ENCODE measurements at regions of chr18 and their contacts with region 1.

Region 1: DNA sequence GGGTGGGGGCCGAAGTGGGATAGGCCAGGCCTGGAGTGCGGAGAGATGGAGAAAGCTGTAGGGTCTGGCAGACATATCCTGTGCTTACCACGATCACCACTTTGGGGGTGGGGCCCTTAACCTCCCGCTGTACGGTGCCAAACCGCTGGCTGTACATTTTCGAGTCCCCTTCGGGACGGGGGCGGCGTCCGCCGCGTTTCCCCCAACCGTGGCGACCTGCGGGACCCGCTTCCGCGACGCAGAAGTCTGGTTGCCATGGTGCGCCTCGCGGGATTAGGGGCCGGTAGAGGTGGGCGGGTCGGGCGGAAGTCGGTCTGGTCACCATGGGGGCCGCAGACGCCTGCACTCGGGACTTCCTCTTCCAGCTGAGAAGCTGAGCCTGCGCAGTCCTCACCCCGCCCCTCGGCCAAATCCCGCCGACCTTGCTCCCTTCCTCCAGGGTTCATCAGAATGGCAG is at the start of gene CFAP53:
- DNase-seq: peak; percentile 82 to 90 (median 87)
- H3K4me3 ChIP-seq: peak within 1 kb of the TSS; percentile 65 to 92 (median 73)
- H3K4me3 Mint-ChIP-seq: peak within 1 kb of the TSS; percentile 85 to 94
- H3K27ac ChIP-seq: peak within 1 kb of the TSS in 1 of 2 donors; percentile 59
- H3K27ac Mint-ChIP-seq: peak within 1 kb of the TSS in 6 of 7 donors; percentile 50 to 84 (median 80)
- H3K4me1 ChIP-seq: peaks cover 18 to 29% of the 10 kb centered on the region in 2 donors
- H3K4me1 Mint-ChIP-seq: peaks cover 23% of the 10 kb centered on the region
- H3K27me3 ChIP-seq: peaks cover 0 to 2% of the 10 kb centered on the region in 2 donors
- H3K27me3 Mint-ChIP-seq: peaks cover 1 to 10% (median 7%) of the 10 kb centered on the region in 3 donors
- CTCF ChIP-seq: no peak
- polyA plus RNA-seq, gene CFAP53: 0.08 to 0.14 TPM in 2 of 3 donors, not detected in the other

Region 2: DNA sequence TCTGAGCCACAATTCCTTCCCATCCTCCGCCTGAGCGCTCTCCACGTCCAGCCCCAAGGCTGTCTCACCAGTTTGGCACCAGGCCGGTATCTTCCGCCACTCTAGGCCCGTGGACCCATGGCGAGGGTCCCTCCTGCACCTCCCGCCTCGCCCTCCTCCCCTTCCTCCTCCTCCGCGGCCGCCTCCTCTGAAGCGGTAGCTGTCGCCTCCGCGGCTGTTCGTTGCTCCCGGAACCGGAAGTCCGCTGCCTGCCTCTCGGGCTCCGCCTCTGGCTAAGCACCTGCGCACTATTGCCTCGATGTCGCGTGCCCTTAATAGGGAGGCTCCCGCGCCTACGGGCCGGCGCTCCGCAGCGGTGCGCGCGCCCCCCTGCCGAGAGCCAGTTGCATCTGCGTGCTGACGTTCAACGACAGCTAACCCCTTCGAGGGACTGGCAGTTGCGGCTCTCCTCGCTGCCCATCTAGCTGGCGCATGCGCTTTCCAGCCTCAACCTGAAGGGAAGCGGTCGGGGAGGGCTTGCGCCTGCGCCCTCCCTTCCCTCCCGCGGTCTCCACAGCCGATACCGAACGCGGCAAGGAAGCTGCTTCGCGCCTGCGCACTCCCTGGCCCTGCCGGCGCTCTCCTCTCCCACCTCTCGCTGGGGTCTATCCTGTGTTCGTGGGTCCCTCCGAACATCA is 15.2 kb after region 1 on chr18 and contains the start of gene MBD1:
- intact Hi-C with region 1: no loop called
- DNase-seq: peak; percentile 97 to 98 (median 98)
- H3K4me3 ChIP-seq: peak within 1 kb of the TSS; percentile 78 to 92 (median 86)
- H3K4me3 Mint-ChIP-seq: peak within 1 kb of the TSS; percentile 93 to 98
- H3K27ac ChIP-seq: peak within 1 kb of the TSS; percentile 86 to 87
- H3K27ac Mint-ChIP-seq: peak within 1 kb of the TSS; percentile 93 to 98 (median 96)
- H3K4me1 ChIP-seq: peaks cover 26 to 55% of the 10 kb centered on the region in 2 donors
- H3K4me1 Mint-ChIP-seq: peaks cover 49% of the 10 kb centered on the region
- H3K27me3 ChIP-seq: no peaks in the 10 kb centered on the region
- H3K27me3 Mint-ChIP-seq: peaks cover 0 to 2% (median 0%) of the 10 kb centered on the region in 3 donors
- CTCF ChIP-seq: peak; percentile 21
- polyA plus RNA-seq, gene MBD1: 13.2 to 88.6 (median 17.4) TPM

Region 3: DNA sequence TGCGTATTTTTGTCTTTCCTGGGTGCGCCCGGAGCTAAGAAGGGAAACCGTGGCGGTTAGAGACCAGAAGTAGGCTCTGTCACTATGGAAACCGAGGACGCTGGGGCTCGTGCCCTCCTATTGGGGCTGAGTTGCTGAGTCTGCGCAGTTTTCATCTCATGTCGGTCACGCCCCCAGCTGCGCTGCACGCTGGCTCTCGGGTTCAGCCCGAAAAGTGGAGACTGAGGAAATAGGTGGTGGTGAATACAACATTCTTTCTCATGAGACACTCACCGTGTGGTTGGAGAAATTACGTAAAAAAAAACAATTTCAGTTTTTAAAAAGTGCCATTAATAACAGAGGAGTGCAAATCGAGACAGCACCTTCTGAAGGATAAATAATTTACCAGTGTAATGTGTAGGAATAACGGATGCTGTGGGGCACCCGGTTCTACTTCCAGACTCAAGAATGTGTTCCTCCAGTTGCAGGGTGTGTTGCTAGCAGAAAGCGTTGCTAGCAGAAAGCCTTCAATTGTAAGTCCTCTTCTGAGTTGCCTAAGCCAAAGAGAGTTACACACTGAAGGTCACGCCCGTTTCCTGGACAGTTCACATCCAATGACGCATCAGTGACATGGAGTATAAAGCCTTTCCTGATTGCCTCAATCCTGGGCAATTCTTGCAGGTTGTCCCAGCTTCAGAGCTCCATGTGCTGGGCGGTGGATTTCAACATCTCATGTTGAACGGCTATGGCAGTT is 41.6 kb after region 1 on chr18:
- intact Hi-C with region 1: loop called in 1 of 2 experiments (anchors 5 kb)
- DNase-seq: peak; percentile 98 to 100 (median 100)
- H3K4me3 ChIP-seq: peak overlapping the region; percentile 35 to 80 (median 43)
- H3K4me3 Mint-ChIP-seq: peak overlapping the region; percentile 87 to 96
- H3K27ac ChIP-seq: peak overlapping the region; percentile 83 to 88
- H3K27ac Mint-ChIP-seq: peak overlapping the region; percentile 97 to 100 (median 100)
- H3K4me1 ChIP-seq: peaks cover 24 to 34% of the 10 kb centered on the region in 2 donors
- H3K4me1 Mint-ChIP-seq: peaks cover 30% of the 10 kb centered on the region
- H3K27me3 ChIP-seq: peaks cover 0 to 2% of the 10 kb centered on the region in 2 donors
- H3K27me3 Mint-ChIP-seq: peaks cover 2 to 13% (median 9%) of the 10 kb centered on the region in 3 donors
- CTCF ChIP-seq: no peak

Region 4: GRCh38 chr18:50334546-50335152 is 68.4 kb after region 1 on chr18:
- intact Hi-C with region 1: no loop called
- DNase-seq: no peak
- H3K4me3 ChIP-seq: no peak overlapping the region
- H3K4me3 Mint-ChIP-seq: no peak overlapping the region
- H3K27ac ChIP-seq: no peak overlapping the region
- H3K27ac Mint-ChIP-seq: peak overlapping the region in 1 of 7 donors; percentile 6
- H3K4me1 ChIP-seq: peaks cover 0 to 4% of the 10 kb centered on the region in 2 donors
- H3K4me1 Mint-ChIP-seq: peaks cover 9% of the 10 kb centered on the region
- H3K27me3 ChIP-seq: no peaks in the 10 kb centered on the region
- H3K27me3 Mint-ChIP-seq: peaks cover 4 to 16% (median 6%) of the 10 kb centered on the region in 3 donors
- CTCF ChIP-seq: no peak

Region 5: GRCh38 chr18:50401888-50402287 is 135.6 kb after region 1 on chr18:
- intact Hi-C with region 1: no loop called
- DNase-seq: no peak
- H3K4me3 ChIP-seq: no peak overlapping the region
- H3K4me3 Mint-ChIP-seq: peak overlapping the region in 1 of 2 donors; percentile 60
- H3K27ac ChIP-seq: no peak overlapping the region
- H3K27ac Mint-ChIP-seq: no peak overlapping the region
- H3K4me1 ChIP-seq: no peaks in the 10 kb centered on the region
- H3K4me1 Mint-ChIP-seq: no peaks in the 10 kb centered on the region
- H3K27me3 ChIP-seq: peaks cover 23 to 49% of the 10 kb centered on the region in 2 donors
- H3K27me3 Mint-ChIP-seq: peaks cover 62 to 76% (median 63%) of the 10 kb centered on the region in 3 donors
- CTCF ChIP-seq: no peak

Region 6: DNA sequence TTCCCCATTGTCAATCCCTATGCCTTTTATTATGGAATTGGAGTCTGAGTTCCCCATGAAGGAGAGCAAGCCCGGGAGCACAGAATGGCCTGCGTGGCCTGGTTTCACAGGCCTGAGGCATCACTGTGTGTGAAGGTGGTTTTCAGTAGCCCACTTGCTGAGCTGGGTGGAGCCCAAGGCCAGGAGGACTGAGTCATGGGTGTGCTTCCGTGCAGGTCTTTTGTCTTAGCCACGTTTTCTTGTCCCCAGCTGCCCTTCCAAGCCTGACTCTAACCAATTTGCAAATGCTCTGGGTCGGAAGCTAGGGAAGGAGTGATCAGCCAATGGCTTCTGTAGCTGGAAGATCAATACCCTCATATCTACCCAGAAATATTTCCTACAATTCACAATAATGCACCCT is 412.8 kb after region 1 on chr18:
- intact Hi-C with region 1: no loop called
- DNase-seq: no peak
- H3K4me3 ChIP-seq: no peak overlapping the region
- H3K4me3 Mint-ChIP-seq: no peak overlapping the region
- H3K27ac ChIP-seq: no peak overlapping the region
- H3K27ac Mint-ChIP-seq: no peak overlapping the region
- H3K4me1 ChIP-seq: no peaks in the 10 kb centered on the region
- H3K4me1 Mint-ChIP-seq: no peaks in the 10 kb centered on the region
- H3K27me3 ChIP-seq: no peaks in the 10 kb centered on the region
- H3K27me3 Mint-ChIP-seq: peaks cover 2 to 5% (median 4%) of the 10 kb centered on the region in 3 donors
- CTCF ChIP-seq: no peak

Measured in CD14-positive monocyte (primary cell).